Natural killer cell (primary cell): ENCODE measurements at regions of chrX and their contacts with region 1.

Region 1: DNA sequence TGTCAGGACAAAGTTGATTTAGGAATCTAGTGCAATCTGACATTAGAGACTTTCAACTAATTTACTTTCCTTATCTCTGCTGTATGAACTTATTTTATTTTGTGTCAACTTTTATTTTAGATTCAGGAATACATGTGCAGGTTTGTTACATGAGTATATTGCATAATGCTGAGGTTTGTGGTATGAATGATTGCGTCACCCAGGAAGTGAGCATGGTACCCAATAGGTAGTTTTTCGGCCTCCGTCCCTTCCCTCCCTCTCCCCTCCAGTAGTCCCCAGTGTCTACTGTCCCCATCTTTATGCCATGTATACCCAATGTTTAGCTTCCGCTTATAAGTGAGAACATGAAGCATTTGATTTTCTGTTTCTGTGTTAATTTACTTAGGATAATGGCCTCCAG is 68.7 kb upstream of the TEX13D start:
- DNase-seq: peak in 1 of 2 donors; percentile 50
- ATAC-seq: peak in 2 of 3 donors; percentile 57 to 58
- H3K4me3 ChIP-seq: no peak overlapping the region
- H3K4me3 Mint-ChIP-seq: no peak overlapping the region
- H3K27ac ChIP-seq: no peak overlapping the region
- H3K27ac Mint-ChIP-seq: peak overlapping the region in 1 of 2 donors; percentile 36
- H3K4me1 ChIP-seq: peaks cover 7% of the 10 kb centered on the region
- H3K4me1 Mint-ChIP-seq: peaks cover 5 to 37% of the 10 kb centered on the region in 2 donors
- H3K27me3 ChIP-seq: no peaks in the 10 kb centered on the region
- H3K27me3 Mint-ChIP-seq: no peaks in the 10 kb centered on the region
- CTCF ChIP-seq: no peak

Region 2: GRCh38 chrX:123993326-123993725 is 270.4 kb before region 1 on chrX:
- intact Hi-C with region 1: no loop called
- DNase-seq: no peak
- ATAC-seq: no peak
- H3K4me3 ChIP-seq: no peak overlapping the region
- H3K4me3 Mint-ChIP-seq: no peak overlapping the region
- H3K27ac ChIP-seq: no peak overlapping the region
- H3K27ac Mint-ChIP-seq: peak overlapping the region in 1 of 2 donors; percentile 61
- H3K4me1 ChIP-seq: peaks cover 3% of the 10 kb centered on the region
- H3K4me1 Mint-ChIP-seq: peaks cover 38 to 41% of the 10 kb centered on the region in 2 donors
- H3K27me3 ChIP-seq: no peaks in the 10 kb centered on the region
- H3K27me3 Mint-ChIP-seq: no peaks in the 10 kb centered on the region
- CTCF ChIP-seq: no peak

Region 3: GRCh38 chrX:124098089-124098488 is 165.7 kb before region 1 on chrX:
- intact Hi-C with region 1: no loop called
- DNase-seq: peak in 1 of 2 donors; percentile 52
- ATAC-seq: peak in 2 of 3 donors; percentile 55 to 62
- H3K4me3 ChIP-seq: no peak overlapping the region
- H3K4me3 Mint-ChIP-seq: no peak overlapping the region
- H3K27ac ChIP-seq: no peak overlapping the region
- H3K27ac Mint-ChIP-seq: no peak overlapping the region
- H3K4me1 ChIP-seq: no peaks in the 10 kb centered on the region
- H3K4me1 Mint-ChIP-seq: no peaks in the 10 kb centered on the region
- H3K27me3 ChIP-seq: no peaks in the 10 kb centered on the region
- H3K27me3 Mint-ChIP-seq: no peaks in the 10 kb centered on the region
- CTCF ChIP-seq: peak; percentile 64

Region 4: DNA sequence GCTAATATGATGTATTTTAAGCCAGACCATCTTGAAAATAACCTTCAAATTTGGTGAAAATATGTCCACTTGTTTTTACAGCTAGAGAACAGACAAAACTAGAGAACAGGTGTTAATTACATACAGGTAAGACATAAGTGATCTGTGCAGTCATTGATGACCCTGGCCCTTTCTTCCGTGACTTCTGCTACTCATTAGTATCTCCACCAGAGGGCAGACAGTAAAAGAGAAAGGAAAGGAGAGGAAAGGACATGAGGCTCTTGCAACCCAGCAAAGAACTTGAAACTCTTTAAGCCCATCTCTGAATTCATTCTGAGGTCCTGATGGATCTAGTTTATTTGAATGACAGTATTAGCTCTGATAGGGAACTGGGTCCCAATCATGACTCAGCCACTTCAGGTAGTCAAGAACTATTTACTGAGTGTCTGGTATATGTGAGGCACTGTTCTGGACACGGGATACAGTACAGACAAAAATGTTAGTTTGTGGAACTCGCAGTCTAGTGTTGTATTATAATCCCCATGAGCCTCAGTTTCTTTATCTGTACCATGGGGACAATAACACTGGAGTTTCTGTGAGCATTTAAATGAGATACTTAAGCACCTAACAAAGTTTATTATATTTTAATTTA is 52.3 kb before region 1 on chrX:
- intact Hi-C with region 1: loop called (anchors 10 kb)
- DNase-seq: peak in 1 of 2 donors; percentile 69
- ATAC-seq: peak; percentile 60 to 85 (median 80)
- H3K4me3 ChIP-seq: no peak overlapping the region
- H3K4me3 Mint-ChIP-seq: no peak overlapping the region
- H3K27ac ChIP-seq: no peak overlapping the region
- H3K27ac Mint-ChIP-seq: no peak overlapping the region
- H3K4me1 ChIP-seq: peaks cover 10% of the 10 kb centered on the region
- H3K4me1 Mint-ChIP-seq: peaks cover 19 to 30% of the 10 kb centered on the region in 2 donors
- H3K27me3 ChIP-seq: no peaks in the 10 kb centered on the region
- H3K27me3 Mint-ChIP-seq: peaks cover 0 to 26% of the 10 kb centered on the region in 2 donors
- CTCF ChIP-seq: peak; percentile 58

Region 5: GRCh38 chrX:124338733-124339514 is 75.2 kb after region 1 on chrX:
- intact Hi-C with region 1: loop called (anchors 5 kb)
- DNase-seq: peak; percentile 33 to 79
- ATAC-seq: peak; percentile 63 to 85 (median 78)
- H3K4me3 ChIP-seq: no peak overlapping the region
- H3K4me3 Mint-ChIP-seq: peak overlapping the region; percentile 1
- H3K27ac ChIP-seq: peak overlapping the region; percentile 50
- H3K27ac Mint-ChIP-seq: peak overlapping the region; percentile 80
- H3K4me1 ChIP-seq: peaks cover 22% of the 10 kb centered on the region
- H3K4me1 Mint-ChIP-seq: peaks cover 43% of the 10 kb centered on the region in 2 donors
- H3K27me3 ChIP-seq: no peaks in the 10 kb centered on the region
- H3K27me3 Mint-ChIP-seq: peaks cover 0 to 8% of the 10 kb centered on the region in 2 donors
- CTCF ChIP-seq: no peak